A673 (cell line): ENCODE measurements at regions of chr18 and their contacts with region 1.

Region 1: DNA sequence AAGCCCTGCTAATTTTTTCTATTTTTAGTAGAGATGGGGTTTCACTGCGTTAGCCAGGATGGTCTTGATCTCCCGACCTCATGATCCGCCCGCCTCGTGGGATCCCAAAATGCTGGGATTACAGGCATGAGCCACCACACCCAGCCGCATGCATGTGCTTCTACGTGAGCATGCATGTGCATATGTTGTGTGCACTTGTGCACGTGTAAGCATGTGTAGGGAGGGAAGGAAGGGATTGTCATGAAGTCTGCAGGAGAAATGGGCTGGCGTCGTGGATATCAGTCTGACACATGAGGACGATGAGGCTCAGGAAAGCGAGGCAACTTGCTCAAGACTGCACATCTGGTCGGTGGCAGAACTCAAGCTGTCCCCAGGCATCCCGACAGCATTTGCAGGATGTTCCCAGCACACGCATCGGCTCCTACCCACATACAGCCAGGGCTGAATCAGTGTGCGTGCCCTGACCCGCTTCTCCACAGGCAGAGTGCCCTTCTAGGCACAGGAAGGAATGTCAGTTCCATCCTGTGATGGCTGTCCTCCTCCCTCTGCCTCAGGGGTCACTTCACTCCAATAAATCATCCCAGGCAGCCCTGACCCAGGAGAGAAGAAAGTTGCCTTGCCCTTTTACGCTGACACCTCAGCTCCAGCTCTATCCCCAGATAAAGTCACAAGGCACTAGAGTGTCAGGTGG is 49.9 kb upstream of the SLC14A2 start:
- DNase-seq: no peak
- H3K4me3 ChIP-seq: no peak overlapping the region
- H3K27ac ChIP-seq: no peak overlapping the region
- H3K4me1 ChIP-seq: no peaks in the 10 kb centered on the region
- H3K27me3 ChIP-seq: no peaks in the 10 kb centered on the region
- CTCF ChIP-seq: no peak

Region 2: GRCh38 chr18:45437366-45437765 is 128.1 kb before region 1 on chr18:
- CTCF ChIA-PET with region 1: no interaction called
- POLR2A ChIA-PET with region 1: no interaction called
- intact Hi-C with region 1: no loop called
- DNase-seq: no peak
- H3K4me3 ChIP-seq: no peak overlapping the region
- H3K27ac ChIP-seq: no peak overlapping the region
- H3K4me1 ChIP-seq: no peaks in the 10 kb centered on the region
- H3K27me3 ChIP-seq: no peaks in the 10 kb centered on the region
- CTCF ChIP-seq: no peak

Region 3: DNA sequence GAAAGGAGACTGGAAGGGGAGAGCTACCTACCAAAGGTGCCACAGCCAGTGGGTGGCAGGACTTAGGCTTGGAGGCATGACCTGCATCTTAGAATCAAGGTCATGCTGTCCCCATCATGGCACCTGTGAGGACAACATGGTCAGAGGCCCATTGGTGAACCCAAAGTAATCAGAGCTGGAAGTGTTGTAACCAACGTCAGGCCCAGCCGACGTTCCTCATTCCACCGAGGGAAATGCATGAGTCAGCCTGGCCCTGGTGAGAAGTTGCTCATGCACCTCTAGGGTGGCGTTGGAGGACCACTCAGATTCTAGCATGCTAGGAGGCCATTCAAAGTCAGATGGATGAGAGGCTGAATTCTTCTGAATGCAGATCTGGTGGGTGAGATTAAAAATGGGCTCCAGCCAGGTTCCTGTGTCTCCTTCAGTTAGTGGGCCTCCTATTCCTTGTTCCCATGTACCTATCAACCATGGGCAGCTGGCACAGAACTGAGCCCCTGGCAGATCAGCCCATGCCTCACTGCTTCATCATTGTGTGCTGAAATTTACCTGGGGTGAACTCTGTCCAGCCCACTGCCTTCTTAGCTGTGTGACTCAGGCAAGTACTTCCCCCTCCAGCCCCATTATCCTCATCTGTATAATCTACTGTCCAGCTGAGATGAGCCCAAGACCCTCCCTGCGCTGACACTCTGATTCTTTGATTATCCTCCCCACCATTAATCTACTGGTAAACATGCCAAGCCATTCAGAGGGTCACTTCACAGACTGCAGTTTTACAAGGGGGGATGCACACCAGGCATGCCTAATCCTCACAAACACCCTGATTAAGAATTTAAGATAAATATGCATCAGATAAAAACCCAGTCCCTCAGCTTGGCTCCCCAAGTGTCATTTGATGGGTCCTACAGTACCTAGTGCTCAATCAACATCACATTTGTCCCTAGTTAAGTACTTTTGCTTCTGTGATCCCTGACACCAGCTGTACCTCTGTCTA is 63.8 kb after region 1 on chr18:
- CTCF ChIA-PET with region 1: no interaction called
- POLR2A ChIA-PET with region 1: interaction called, 13 read pairs
- intact Hi-C with region 1: no loop called
- DNase-seq: no peak
- H3K4me3 ChIP-seq: no peak overlapping the region
- H3K27ac ChIP-seq: no peak overlapping the region
- H3K4me1 ChIP-seq: no peaks in the 10 kb centered on the region
- H3K27me3 ChIP-seq: peaks cover 2% of the 10 kb centered on the region
- CTCF ChIP-seq: no peak

Region 4: DNA sequence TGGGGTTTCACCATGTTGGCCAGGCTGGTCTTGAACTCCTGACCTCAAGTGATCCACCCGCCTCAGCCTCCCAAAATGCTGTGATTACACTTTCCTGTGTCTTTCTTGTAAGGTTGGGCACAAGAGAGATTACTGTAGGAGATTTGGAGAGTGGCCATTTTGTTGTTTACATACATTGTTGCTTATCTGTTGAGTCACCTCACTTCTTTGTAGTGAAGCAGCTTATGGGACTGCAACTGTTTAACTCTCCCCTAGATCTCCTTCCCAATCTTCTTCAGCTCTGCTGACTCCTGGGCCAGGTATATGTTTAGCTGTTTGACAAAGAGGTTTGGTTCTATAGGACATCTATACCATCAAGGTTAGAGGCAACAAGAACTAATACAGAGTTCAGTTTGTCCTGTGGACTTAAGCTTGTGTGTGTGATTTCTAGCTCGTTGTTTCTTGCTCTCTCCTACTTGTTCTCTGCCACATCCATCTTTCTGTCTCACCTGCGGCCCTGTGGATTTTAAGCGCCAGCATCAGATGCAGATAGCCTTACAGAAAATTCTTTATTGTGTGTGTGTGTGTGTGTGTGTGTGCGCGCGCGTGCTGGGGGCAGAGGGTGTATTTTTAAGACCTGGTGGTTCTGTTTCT is 634.2 kb after region 1 on chr18:
- CTCF ChIA-PET with region 1: no interaction called
- POLR2A ChIA-PET with region 1: no interaction called
- intact Hi-C with region 1: no loop called
- DNase-seq: no peak
- H3K4me3 ChIP-seq: no peak overlapping the region
- H3K27ac ChIP-seq: no peak overlapping the region
- H3K4me1 ChIP-seq: peaks cover 5% of the 10 kb centered on the region
- H3K27me3 ChIP-seq: no peaks in the 10 kb centered on the region
- CTCF ChIP-seq: no peak